Body of pancreas (tissue), 4 donors: ENCODE measurements at regions of chr3 and their contacts with region 1.

Region 1: DNA sequence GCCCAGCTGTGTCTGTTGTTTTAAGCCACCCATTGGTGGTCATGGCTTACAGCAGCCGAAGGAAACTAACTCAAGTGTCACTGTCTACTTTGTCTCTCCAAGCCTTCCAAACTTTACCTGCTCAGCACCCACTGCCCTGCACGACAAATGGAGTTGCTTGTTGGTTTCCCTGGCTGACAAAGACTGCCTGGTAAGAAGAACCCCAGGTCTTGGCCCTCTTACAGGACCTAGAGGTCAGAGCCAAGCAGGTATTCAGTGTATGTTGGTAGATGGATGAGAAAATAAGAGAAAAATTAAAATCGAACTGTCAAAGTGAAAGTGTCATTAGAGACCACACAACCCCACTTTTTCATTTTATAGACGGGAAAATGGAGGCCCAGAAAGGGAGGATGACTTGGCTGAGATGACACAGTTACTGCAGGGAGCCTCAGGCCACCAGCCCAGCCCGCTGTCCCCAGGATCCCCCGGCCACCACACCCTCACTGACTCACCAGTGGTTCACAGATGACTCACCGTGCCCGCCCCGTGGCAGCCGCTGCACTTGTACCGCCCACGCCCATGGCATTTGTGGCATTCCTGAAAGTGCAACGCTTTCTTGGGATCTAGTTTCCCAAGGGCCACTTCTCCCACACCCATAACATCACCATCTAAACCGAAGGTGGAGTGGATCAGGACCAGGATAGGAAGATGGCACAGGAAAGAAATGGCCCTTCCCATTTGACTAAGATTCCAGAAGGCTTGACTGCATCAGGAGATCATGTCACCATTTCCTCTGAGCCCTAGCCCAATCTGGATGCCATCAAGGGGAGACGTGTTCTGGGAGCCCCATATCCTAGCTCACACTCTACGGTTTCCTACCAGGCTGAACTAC is 15.2 kb downstream of the SSUH2 start:
- DNase-seq: peak in 2 of 4 donors; percentile 30 to 38
- ATAC-seq: peak; percentile 52
- H3K4me3 ChIP-seq: no peak overlapping the region
- H3K27ac ChIP-seq: no peak overlapping the region
- H3K4me1 ChIP-seq: no peaks in the 10 kb centered on the region
- H3K27me3 ChIP-seq: no peaks in the 10 kb centered on the region
- CTCF ChIP-seq: no peak
- POLR2A ChIP-seq: no peak

Region 2: DNA sequence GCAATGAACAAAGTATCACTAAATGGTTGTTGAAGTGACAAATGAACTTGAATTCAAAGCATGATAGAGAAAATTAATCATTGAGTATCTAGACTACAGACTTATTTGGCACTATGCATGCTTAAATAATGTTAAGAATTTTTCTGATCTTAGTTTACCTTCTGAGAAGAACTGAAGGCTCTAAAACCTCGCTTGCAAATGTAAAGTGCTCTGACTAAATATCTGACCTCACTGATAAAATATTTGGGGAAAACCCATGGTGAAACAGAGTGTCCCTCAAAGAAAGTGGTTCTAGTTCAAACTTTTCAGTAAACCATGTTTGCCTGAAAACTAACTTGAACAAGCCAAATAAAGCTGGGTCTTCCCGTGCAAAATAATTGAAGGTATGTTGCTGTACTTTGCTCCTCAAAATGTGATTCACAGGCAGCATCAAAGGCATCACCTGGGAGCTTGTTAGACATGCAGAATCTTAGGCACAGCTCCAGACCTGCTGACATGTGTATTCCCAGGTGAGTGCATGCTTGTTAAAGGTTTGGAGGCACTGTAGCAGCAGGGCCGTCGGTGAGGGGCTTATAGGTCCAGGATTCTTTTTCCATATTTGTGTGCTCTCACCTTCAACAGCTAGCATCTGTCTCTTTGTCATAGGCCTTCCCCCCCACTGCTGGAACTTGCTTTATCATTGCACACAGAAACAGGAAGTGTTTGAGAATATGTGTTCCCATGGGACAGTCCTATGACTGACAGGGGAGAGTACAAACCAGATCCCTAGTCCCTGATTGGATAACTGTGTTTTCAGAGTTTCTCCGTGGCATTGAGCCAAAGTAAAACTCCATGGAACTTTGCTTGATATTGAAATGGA is 651.9 kb before region 1 on chr3:
- intact Hi-C with region 1: no loop called
- DNase-seq: no peak
- ATAC-seq: peak; percentile 75
- H3K4me3 ChIP-seq: no peak overlapping the region
- H3K27ac ChIP-seq: peak overlapping the region in 1 of 4 donors; percentile 12
- H3K4me1 ChIP-seq: no peaks in the 10 kb centered on the region
- H3K27me3 ChIP-seq: no peaks in the 10 kb centered on the region
- CTCF ChIP-seq: no peak
- POLR2A ChIP-seq: no peak

Region 3: GRCh38 chr3:8436718-8437184 is 192.6 kb before region 1 on chr3:
- intact Hi-C with region 1: loop called (anchors 5 kb)
- DNase-seq: peak in 2 of 4 donors; percentile 18
- ATAC-seq: peak; percentile 68
- H3K4me3 ChIP-seq: no peak overlapping the region
- H3K27ac ChIP-seq: no peak overlapping the region
- H3K4me1 ChIP-seq: no peaks in the 10 kb centered on the region
- H3K27me3 ChIP-seq: no peaks in the 10 kb centered on the region
- CTCF ChIP-seq: no peak
- POLR2A ChIP-seq: no peak